ENCODE measurements at regions of chr15 and their contacts with region 1.

Region 1: DNA sequence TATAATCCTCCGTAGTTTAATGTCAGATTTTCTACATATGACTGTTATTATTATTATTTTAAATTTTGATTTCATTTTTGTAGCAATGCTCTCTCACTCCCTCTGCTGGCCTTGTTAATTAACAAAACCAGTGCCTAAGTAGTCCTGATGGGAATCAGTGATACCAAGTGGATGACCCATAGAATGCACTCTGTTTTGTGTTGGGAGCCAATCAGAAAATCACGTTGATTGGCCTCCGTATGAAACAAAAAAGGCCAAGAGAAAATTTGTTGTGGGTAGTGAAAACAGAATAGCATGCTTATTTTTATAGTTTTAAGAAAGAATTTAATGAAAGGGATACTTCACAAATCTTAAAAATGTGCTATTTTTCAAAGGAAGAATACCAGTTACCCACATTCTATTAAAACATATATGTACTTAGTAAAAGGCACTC is 34.4 kb upstream of the MEIS2 start:
- DNase-seq: peak; percentile 58
- ATAC-seq: peak; percentile 68
- H3K4me3 ChIP-seq: no peak overlapping the region
- H3K27ac ChIP-seq: no peak overlapping the region
- H3K4me1 ChIP-seq: peaks cover 1% of the 10 kb centered on the region; the same call in 1 of the 2 replicates
- H3K27me3 ChIP-seq: no peaks in the 10 kb centered on the region
- CTCF ChIP-seq: peak; percentile 80
- POLR2A ChIP-seq: no peak
- RAD21 ChIP-seq: peak; percentile 53

Region 2: GRCh38 chr15:36208868-36209582 is 925.7 kb before region 1 on chr15:
- CTCF ChIA-PET with region 1: no interaction called
- POLR2A ChIA-PET with region 1: no interaction called
- dilution Hi-C with region 1: no loop called
- in situ Hi-C with region 1: loop called (anchors 25 kb)
- intact Hi-C with region 1: loop called (anchors 5 kb)
- DNase-seq: peak; percentile 37
- ATAC-seq: no peak
- H3K4me3 ChIP-seq: no peak overlapping the region
- H3K27ac ChIP-seq: no peak overlapping the region
- H3K4me1 ChIP-seq: 0 out of 2 replicates have a peak, but pooled peaks cover 2% of the 10 kb centered on the region
- H3K27me3 ChIP-seq: no peaks in the 10 kb centered on the region
- CTCF ChIP-seq: peak; percentile 54
- POLR2A ChIP-seq: no peak
- RAD21 ChIP-seq: peak; percentile 62

Region 3: DNA sequence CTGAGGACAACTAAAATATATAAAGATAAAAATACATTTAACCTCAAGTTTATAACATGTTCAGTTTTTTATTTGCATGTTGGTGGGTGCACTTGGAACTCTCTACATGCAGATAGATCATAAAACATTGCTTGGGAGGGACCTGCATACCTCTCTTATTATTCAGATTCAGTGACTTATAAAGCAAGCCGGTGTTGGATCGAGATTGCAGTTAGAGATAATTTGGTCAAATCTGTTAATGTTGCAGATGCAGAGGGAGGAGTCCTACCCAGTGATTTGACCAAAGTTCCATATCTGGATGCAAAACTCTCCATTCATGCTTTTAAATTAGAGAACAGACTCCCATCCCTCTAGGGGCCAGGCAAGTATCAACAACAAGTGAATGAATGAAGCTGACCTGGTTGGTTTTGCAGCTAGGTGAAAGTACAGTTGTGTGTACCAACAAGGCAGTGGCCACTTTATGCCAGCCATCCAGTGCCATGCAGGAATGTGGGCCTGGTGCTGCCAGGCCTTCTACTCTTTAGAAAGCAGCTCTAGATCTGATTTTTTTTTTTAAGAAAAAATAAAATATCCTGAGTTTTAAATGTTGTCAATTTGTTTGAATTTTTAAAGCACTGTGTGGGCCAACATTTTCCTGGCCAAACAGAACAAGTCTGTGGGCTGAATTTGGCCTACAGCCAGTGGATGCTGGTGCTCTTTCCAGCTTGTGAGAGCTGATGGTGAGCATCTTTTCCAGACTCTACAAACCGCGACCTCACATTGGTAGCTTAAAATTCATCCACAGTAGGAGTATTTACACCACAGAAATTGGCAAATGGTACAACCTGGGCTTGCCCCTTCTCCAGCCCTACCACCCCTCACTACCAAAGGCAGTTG is 542.9 kb before region 1 on chr15:
- CTCF ChIA-PET with region 1: no interaction called
- POLR2A ChIA-PET with region 1: no interaction called
- dilution Hi-C with region 1: no loop called
- in situ Hi-C with region 1: no loop called
- intact Hi-C with region 1: loop called (anchors 10 kb)
- DNase-seq: no peak
- ATAC-seq: peak; percentile 13; the same call in 1 of the 2 replicates
- H3K4me3 ChIP-seq: no peak overlapping the region
- H3K27ac ChIP-seq: no peak overlapping the region
- H3K4me1 ChIP-seq: peaks cover 10% of the 10 kb centered on the region
- H3K27me3 ChIP-seq: no peaks in the 10 kb centered on the region
- CTCF ChIP-seq: no peak
- POLR2A ChIP-seq: no peak
- RAD21 ChIP-seq: no peak

Region 4: GRCh38 chr15:36883713-36884517 is 250.8 kb before region 1 on chr15:
- CTCF ChIA-PET with region 1: interaction called, 12 read pairs
- POLR2A ChIA-PET with region 1: no interaction called
- dilution Hi-C with region 1: no loop called
- in situ Hi-C with region 1: loop called (anchors 10 kb)
- intact Hi-C with region 1: loop called (anchors 1 kb)
- DNase-seq: peak; percentile 86
- ATAC-seq: peak; percentile 90
- H3K4me3 ChIP-seq: peak overlapping the region; percentile 35; the same call in 1 of the 2 replicates
- H3K27ac ChIP-seq: no peak overlapping the region
- H3K4me1 ChIP-seq: peaks cover 3% of the 10 kb centered on the region; the same call in 1 of the 2 replicates
- H3K27me3 ChIP-seq: peaks cover 24% of the 10 kb centered on the region
- CTCF ChIP-seq: peak; percentile 88
- POLR2A ChIP-seq: no peak
- RAD21 ChIP-seq: peak; percentile 91

Region 5: DNA sequence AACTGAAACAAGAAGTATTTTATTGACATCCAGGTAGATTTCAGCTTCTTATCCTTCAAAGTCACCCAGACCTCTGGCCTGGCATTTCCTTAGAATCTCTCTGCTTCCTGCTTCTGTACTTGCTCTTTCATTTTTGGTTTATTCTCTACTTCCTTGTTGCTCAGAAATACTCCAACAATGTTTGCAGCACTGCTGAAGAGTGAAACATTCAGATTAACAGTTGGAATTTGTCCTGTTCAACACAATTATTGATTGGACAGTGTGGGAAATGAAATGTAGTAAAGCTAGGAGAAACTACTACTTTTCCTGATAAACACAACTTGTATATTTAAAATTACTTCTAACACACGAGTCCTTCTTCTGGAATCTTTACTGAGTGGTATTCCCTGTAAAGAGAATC is 46.6 kb after region 1 on chr15:
- CTCF ChIA-PET with region 1: no interaction called
- POLR2A ChIA-PET with region 1: no interaction called
- dilution Hi-C with region 1: no loop called
- in situ Hi-C with region 1: no loop called
- intact Hi-C with region 1: no loop called
- DNase-seq: no peak
- ATAC-seq: no peak
- H3K4me3 ChIP-seq: no peak overlapping the region
- H3K27ac ChIP-seq: no peak overlapping the region
- H3K4me1 ChIP-seq: no peaks in the 10 kb centered on the region
- H3K27me3 ChIP-seq: no peaks in the 10 kb centered on the region
- CTCF ChIP-seq: no peak
- POLR2A ChIP-seq: no peak
- RAD21 ChIP-seq: no peak

Region 6: DNA sequence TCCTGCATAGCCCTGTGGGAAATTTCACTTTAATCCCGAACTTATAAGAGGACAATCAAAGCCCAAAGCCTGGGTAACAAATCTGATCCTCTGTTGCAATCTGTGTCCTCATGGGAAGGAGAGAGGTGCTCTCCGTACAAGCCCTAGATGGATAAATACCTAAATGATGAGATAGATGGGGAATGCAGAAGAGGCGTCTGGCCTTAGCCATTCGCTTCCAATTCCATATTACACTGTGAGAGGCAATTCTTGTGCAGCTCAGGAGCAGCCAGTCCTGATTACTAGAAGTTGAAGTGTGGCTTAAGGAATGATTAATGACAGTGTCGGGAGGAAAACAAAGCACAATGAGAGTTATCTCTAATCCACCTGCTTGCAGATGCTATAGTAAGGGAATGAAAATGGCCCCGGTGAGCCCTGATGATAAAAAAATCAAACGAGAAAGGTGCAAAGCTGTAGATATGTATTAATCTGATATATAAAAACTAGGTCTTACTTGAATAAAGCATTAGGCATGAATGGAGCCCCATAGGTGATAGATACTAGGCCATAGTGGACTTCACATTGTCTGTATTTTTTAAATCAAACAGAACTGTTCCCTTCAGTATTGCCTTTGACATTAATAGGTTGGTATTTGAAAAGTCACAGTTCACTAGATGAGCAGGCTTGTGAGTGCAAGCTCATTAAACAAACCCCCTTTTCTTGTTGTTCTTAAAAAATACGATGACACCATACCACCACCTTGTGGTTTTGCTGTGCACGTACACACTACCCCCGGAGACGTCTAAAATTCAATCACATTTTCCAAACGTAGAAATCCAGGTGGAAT is 745.5 kb after region 1 on chr15:
- CTCF ChIA-PET with region 1: no interaction called
- POLR2A ChIA-PET with region 1: no interaction called
- dilution Hi-C with region 1: no loop called
- in situ Hi-C with region 1: loop called (anchors 10 kb)
- intact Hi-C with region 1: loop called (anchors 2 kb)
- DNase-seq: peak; percentile 75
- ATAC-seq: peak; percentile 76
- H3K4me3 ChIP-seq: no peak overlapping the region
- H3K27ac ChIP-seq: no peak overlapping the region
- H3K4me1 ChIP-seq: peaks cover 12% of the 10 kb centered on the region
- H3K27me3 ChIP-seq: no peaks in the 10 kb centered on the region
- CTCF ChIP-seq: peak; percentile 86
- POLR2A ChIP-seq: no peak
- RAD21 ChIP-seq: peak; percentile 87